RWPE1 (cell line): ENCODE measurements at regions of chr1 and their contacts with region 1.

Region 1: GRCh38 chr1:66242646-66243547 is 291.1 kb upstream of the SGIP1 start:
- DNase-seq: peak; percentile 75
- H3K27ac ChIP-seq: no peak overlapping the region
- CTCF ChIP-seq: peak; percentile 97

Region 2: DNA sequence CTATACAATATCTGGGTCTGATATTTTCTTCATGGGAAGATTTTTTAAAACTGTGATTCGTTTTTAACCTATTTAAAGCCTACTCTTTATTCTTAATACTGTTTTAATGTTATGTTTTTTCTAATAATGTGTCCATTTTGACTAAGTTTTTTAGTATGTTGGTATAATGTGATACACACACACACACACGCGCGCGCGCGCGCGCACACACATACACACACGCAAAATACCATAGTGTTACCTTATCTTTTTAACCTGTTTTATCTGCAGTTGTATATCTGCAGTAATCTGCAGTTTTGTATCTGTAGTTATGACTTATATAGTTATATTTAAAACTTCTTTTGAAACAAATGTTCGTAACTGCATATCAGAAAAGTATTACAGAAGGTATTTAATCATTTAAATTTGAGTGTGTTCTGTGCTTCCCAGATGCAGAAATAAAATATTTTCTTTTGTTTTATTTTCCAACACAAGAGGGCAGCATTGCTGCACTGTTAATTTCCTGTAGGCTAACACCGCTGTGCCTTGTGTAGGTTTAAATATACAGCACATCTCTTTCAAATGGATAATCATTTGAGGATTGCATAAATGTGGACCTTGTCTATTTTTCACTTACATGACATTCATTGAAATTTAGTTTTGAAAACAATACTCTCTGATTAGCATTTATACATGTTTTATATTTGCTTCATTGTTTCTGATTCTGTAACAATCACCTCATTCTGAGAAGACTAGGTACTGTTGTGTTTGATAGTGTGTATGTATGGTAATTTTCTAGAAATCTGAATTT is 284.1 kb before region 1 on chr1:
- CTCF ChIA-PET with region 1: interaction called, 34 read pairs
- POLR2A ChIA-PET with region 1: no interaction called
- DNase-seq: peak; percentile 32
- H3K27ac ChIP-seq: no peak overlapping the region
- CTCF ChIP-seq: peak; percentile 69

Region 3: DNA sequence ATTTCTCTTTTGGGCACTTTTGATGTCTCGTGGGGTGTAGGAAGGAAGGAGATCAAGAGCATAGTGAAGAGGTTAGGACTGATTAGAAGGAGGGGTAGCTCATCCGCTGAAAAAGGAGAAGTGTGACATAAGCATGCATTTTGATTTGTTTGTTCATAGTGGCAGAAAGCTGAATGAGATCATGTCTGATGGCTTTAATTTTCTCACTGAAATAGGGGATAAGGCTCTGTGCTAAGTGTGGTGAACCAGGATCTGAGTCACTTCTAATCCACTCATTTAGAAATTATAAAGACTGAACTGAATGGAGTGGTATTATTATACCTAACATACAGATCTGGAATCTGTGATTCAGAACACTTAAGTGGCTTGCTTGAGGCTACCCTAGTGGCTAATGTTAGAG is 105.7 kb before region 1 on chr1:
- CTCF ChIA-PET with region 1: no interaction called
- POLR2A ChIA-PET with region 1: no interaction called
- DNase-seq: no peak
- H3K27ac ChIP-seq: no peak overlapping the region
- CTCF ChIP-seq: no peak

Region 4: GRCh38 chr1:66446261-66447001 is 203.5 kb after region 1 on chr1:
- CTCF ChIA-PET with region 1: interaction called, 10 read pairs
- POLR2A ChIA-PET with region 1: no interaction called
- DNase-seq: peak; percentile 64
- H3K27ac ChIP-seq: no peak overlapping the region
- CTCF ChIP-seq: peak; percentile 78